Mammary epithelial cell (primary cell): ENCODE measurements at regions of chr20 and their contacts with region 1.

Region 1: GRCh38 chr20:50844430-50845100 is 49.7 kb downstream of the BCAS4 start:
- DNase-seq: peak; percentile 99
- H3K4me3 ChIP-seq: no peak overlapping the region
- H3K27ac ChIP-seq: peak overlapping the region; percentile 77
- H3K4me1 ChIP-seq: peaks cover 54% of the 10 kb centered on the region
- H3K27me3 ChIP-seq: no peaks in the 10 kb centered on the region
- CTCF ChIP-seq: no peak

Region 2: DNA sequence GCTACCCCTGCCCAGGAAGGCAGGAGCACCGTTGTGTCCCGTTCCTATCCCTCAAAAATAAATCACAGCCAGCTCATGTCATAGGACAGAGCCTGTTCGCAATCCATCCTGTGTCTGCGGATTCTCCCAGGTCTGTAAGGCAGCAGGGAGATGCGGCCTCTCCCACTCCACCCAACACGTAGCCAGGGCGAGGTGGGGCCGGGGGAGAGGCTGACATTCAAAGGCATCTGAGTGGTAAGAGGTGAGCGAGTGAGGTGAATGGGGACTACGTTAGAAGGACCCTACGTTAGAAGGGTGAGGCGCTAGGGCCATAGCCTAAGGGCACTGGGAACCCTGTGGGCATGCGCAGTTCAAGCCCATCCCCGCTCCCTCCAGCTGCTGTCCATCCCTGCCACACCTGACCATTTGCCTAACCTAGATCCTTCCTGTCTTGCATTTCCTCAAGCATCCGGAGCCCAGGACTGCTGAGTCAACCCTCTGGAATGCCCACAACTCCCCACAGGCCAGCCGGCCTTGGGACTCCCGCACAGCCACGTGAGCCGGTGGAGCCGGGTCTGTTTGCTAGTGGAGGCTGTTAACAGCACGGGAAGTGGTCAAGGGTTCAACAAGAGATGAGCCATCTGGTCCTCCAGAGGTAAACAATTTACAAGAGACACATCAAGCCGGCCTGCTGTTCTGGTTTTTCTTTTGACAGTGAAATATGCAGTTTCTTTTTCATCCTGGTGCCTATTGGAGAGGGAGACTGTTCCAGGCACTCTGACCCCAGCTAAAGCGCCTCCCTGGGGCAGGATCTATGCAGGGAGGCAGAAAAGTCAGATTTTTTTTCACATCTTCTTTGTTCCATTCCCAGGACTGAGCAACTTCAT is 199.1 kb before region 1 on chr20:
- CTCF ChIA-PET with region 1: no interaction called
- dilution Hi-C with region 1: loop called (anchors 10 kb)
- in situ Hi-C with region 1: no loop called
- intact Hi-C with region 1: no loop called
- DNase-seq: peak; percentile 95
- H3K4me3 ChIP-seq: peak overlapping the region in 1 of 3 experiments; percentile 16
- H3K27ac ChIP-seq: peak overlapping the region; percentile 67
- H3K4me1 ChIP-seq: peaks cover 13% of the 10 kb centered on the region
- H3K27me3 ChIP-seq: no peaks in the 10 kb centered on the region
- CTCF ChIP-seq: no peak

Region 3: GRCh38 chr20:51042654-51043247 is 198.2 kb after region 1 on chr20:
- CTCF ChIA-PET with region 1: no interaction called
- dilution Hi-C with region 1: no loop called
- in situ Hi-C with region 1: no loop called
- intact Hi-C with region 1: no loop called
- DNase-seq: no peak
- H3K4me3 ChIP-seq: no peak overlapping the region
- H3K27ac ChIP-seq: no peak overlapping the region
- H3K4me1 ChIP-seq: no peaks in the 10 kb centered on the region
- H3K27me3 ChIP-seq: peaks cover 2% of the 10 kb centered on the region
- CTCF ChIP-seq: no peak